Activated CD4-positive, alpha-beta T cell treated with anti-CD3 and anti-CD28 coated beads for 36 hours (primary cell): ENCODE measurements at regions of chr4 and their contacts with region 1.

Region 1: GRCh38 chr4:3009422-3009821 is 46.1 kb downstream of the GRK4 start:
- DNase-seq: peak; percentile 64
- ATAC-seq: peak; percentile 60
- H3K4me3 Mint-ChIP-seq: no peak overlapping the region
- H3K27ac Mint-ChIP-seq: no peak overlapping the region
- H3K4me1 Mint-ChIP-seq: peaks cover 23% of the 10 kb centered on the region
- H3K27me3 Mint-ChIP-seq: peaks cover 3% of the 10 kb centered on the region

Region 2: DNA sequence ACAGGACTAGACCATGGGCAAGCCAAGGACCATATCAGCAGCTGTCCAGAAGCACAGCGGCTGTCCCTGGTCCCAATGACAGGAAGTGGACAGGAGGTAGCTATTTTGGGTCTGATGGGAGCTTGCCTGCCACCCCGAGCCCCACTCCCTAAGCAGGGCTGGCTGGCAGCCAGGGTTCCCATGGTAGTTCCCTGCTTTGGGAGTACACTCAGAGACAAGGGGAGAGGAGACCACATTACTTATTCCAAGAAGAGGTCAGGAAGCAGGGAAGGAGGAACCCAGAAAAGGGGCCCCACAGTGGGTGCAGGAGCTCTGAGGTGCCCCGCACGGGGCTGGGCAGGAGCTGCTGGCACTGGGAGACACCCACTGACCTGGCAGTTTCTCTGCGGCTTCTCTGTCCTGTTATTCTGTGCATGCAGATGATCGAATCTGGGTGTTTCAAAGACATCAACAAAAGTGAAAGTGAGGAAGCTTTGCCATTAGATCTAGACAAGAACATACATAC is 28.6 kb after region 1 on chr4:
- CTCF ChIA-PET with region 1: interaction called, 8 read pairs
- POLR2A ChIA-PET with region 1: interaction called, 10 read pairs
- intact Hi-C with region 1: loop called in 1 of 2 experiments (anchors 1 kb)
- DNase-seq: peak; percentile 29
- ATAC-seq: peak; percentile 19
- H3K4me3 Mint-ChIP-seq: peak overlapping the region; percentile 34
- H3K27ac Mint-ChIP-seq: peak overlapping the region; percentile 11
- H3K4me1 Mint-ChIP-seq: peaks cover 36% of the 10 kb centered on the region
- H3K27me3 Mint-ChIP-seq: peaks cover 6% of the 10 kb centered on the region

Region 3: GRCh38 chr4:3085948-3086655 is 76.7 kb after region 1 on chr4:
- CTCF ChIA-PET with region 1: no interaction called
- POLR2A ChIA-PET with region 1: interaction called, 4 read pairs
- intact Hi-C with region 1: loop called in 1 of 2 experiments (anchors 2 kb)
- DNase-seq: no peak
- ATAC-seq: peak; percentile 50
- H3K4me3 Mint-ChIP-seq: peak overlapping the region; percentile 20
- H3K27ac Mint-ChIP-seq: peak overlapping the region; percentile 96
- H3K4me1 Mint-ChIP-seq: peaks cover 68% of the 10 kb centered on the region
- H3K27me3 Mint-ChIP-seq: no peaks in the 10 kb centered on the region

Region 4: DNA sequence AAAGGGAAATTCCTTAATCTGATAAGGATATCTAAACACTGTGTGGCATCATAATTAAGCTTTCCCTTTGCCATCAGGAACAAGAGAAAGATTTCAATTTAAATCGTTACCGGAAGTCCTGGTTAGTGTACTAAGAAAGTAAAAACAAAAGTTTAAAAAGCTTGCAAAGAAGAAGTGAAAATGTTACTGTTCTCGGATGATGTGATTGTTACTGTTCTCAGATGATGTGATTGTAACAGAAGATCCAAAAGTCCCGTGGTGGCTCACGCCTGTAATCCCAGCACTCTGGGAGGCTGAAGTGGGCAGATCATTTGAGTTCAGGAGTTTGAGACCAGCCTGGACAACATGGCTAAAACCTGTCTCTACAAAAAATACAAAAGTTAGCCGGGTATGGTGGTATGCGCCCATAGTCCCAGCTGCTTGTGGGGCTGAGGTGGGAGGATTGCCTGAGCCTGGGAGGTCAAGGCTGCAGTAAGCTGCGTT is 345.9 kb after region 1 on chr4:
- CTCF ChIA-PET with region 1: no interaction called
- POLR2A ChIA-PET with region 1: no interaction called
- intact Hi-C with region 1: no loop called
- DNase-seq: no peak
- ATAC-seq: peak; percentile 69
- H3K4me3 Mint-ChIP-seq: no peak overlapping the region
- H3K27ac Mint-ChIP-seq: no peak overlapping the region
- H3K4me1 Mint-ChIP-seq: peaks cover 23% of the 10 kb centered on the region
- H3K27me3 Mint-ChIP-seq: no peaks in the 10 kb centered on the region